Activated T-helper 1 cell treated with anti-CD3 and anti-CD28 coated beads, Interleukin-12 subunit alpha, Interleukin-12 subunit beta, Interleukin-2, Interleukin-4 antibody, amounts not matched to agents 30 ng/mL and 10 ng/mL and 1 ng/mL, durations not matched to agents 14 hours and 24 hours and 36 hours (primary cell): ENCODE measurements at regions of chr6 and their contacts with region 1.

Region 1: DNA sequence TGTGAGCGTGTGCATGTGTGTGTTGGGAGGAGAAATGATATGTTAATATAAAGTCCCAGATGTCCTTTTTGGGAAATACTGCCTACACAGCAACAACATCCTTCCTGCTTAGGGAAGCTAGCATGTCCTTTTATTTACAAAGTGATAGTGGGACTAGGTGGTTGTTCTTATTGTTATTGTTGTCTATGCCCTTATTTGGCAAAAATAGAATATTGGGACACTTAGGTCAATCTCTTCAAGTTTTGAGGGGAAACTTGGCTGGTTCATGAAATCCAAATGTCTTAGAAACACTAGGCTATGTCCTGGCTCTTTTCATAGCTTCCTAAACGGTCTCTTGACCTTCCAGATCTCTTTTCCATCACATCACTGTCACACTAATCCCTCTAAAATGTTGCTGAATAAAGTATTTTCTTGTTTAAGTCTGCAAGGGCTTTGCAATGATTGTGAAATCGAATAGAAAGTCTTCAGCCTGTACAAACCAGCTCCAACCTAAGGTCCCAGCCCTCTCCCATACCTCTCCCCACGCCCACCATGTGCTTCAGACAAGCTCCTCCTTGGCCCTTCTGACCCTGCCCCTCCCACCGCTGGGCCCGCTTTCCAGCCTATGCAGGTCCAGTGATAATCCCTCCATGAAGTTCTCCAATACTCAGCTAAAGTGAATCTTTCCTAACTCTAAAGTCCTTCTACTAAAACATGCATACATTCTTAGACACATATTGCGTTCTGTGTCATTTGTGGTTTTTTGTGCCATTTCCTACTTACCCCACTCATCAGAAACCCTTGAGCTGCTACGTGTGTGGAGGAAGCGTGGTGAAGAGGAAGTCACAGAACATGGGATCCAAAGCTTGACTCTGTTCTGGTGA is 205.1 kb downstream of the LY86 start:
- DNase-seq: no peak
- H3K4me3 Mint-ChIP-seq: peak overlapping the region; percentile 48
- H3K27ac Mint-ChIP-seq: peak overlapping the region; percentile 82
- H3K4me1 Mint-ChIP-seq: peaks cover 51% of the 10 kb centered on the region
- H3K27me3 Mint-ChIP-seq: peaks cover 10% of the 10 kb centered on the region

Region 2: GRCh38 chr6:6556738-6557505 is 236.7 kb before region 1 on chr6:
- intact Hi-C with region 1: loop called (anchors 5 kb)
- DNase-seq: peak; percentile 15
- H3K4me3 Mint-ChIP-seq: no peak overlapping the region
- H3K27ac Mint-ChIP-seq: no peak overlapping the region
- H3K4me1 Mint-ChIP-seq: peaks cover 49% of the 10 kb centered on the region
- H3K27me3 Mint-ChIP-seq: peaks cover 16% of the 10 kb centered on the region

Region 3: DNA sequence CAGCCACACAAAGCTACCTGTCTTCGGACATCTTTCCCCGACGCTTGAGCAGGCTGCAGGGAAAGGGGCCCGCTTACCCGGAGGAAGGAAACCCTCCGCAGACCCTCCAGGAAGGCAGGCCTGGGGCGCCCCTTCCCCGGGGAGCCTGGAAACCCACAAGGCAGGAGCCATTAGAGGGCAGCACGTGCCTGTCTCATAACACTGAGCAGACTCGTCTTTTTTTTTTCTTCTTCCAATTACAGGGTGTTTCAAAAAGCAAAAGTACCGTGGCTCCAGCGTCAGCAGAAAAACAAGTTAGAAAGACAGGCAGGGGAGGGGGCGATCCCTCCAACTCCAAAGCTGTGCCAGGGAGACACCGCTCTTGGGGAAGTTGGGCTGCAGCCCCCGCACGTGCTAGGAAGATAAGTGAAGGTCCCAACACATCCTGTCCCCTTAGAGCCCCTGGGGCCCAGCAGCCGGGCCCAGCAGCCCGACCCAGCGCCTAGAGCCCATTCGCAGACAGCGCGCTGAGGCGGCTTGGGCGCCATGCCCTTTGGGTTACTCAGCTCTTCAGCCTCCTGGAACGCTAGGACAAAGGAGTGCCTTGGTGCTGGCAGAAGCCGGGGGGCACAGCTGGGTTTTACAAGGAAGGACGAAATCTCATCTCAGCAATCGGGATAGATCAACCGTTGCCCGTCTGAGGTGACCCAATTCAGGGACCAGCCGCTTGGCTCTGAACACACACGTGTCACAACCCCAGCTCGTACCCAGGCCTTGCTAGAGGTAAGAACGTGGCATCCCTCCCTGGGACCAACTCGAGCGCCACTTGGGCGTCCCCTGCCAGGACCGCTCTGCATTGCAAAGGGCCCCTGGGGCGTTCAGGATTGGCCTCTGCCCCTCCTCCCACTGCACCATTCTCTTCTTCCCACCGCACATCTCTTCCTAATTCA is 68.8 kb before region 1 on chr6:
- intact Hi-C with region 1: no loop called
- DNase-seq: peak; percentile 33
- H3K4me3 Mint-ChIP-seq: no peak overlapping the region
- H3K27ac Mint-ChIP-seq: no peak overlapping the region
- H3K4me1 Mint-ChIP-seq: peaks cover 15% of the 10 kb centered on the region
- H3K27me3 Mint-ChIP-seq: peaks cover 18% of the 10 kb centered on the region

Region 4: GRCh38 chr6:6749702-6750491 is 43.7 kb before region 1 on chr6:
- intact Hi-C with region 1: loop called (anchors 2 kb)
- DNase-seq: peak; percentile 42
- H3K4me3 Mint-ChIP-seq: peak overlapping the region; percentile 67
- H3K27ac Mint-ChIP-seq: peak overlapping the region; percentile 61
- H3K4me1 Mint-ChIP-seq: peaks cover 30% of the 10 kb centered on the region
- H3K27me3 Mint-ChIP-seq: peaks cover 13% of the 10 kb centered on the region

Region 5: GRCh38 chr6:6856538-6857523 is 63.2 kb after region 1 on chr6:
- intact Hi-C with region 1: loop called (anchors 1 kb)
- DNase-seq: peak; percentile 45
- H3K4me3 Mint-ChIP-seq: peak overlapping the region; percentile 65
- H3K27ac Mint-ChIP-seq: peak overlapping the region; percentile 89
- H3K4me1 Mint-ChIP-seq: peaks cover 42% of the 10 kb centered on the region
- H3K27me3 Mint-ChIP-seq: peaks cover 8% of the 10 kb centered on the region

Region 6: DNA sequence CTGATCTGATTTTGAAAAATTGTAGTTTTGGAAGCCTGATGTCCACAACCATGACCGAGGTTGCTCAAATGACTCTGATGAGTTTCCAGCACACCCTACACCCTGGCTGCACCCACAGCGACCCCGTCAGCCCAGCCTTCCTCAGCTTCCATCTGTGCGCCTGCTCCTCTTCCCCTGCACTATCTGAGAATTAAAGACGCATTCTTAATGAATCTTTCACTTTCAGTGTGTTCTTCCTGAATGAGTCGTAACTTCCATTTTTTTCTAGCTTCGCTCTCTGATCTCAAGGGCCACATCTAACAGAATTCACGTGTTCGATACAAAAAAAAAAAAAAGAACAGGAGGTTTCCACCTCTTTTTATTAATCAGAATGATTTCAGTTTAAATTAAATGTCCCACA is 292.9 kb after region 1 on chr6:
- intact Hi-C with region 1: loop called (anchors 5 kb)
- DNase-seq: no peak
- H3K4me3 Mint-ChIP-seq: peak overlapping the region; percentile 63
- H3K27ac Mint-ChIP-seq: no peak overlapping the region
- H3K4me1 Mint-ChIP-seq: peaks cover 27% of the 10 kb centered on the region
- H3K27me3 Mint-ChIP-seq: peaks cover 81% of the 10 kb centered on the region

Region 7: DNA sequence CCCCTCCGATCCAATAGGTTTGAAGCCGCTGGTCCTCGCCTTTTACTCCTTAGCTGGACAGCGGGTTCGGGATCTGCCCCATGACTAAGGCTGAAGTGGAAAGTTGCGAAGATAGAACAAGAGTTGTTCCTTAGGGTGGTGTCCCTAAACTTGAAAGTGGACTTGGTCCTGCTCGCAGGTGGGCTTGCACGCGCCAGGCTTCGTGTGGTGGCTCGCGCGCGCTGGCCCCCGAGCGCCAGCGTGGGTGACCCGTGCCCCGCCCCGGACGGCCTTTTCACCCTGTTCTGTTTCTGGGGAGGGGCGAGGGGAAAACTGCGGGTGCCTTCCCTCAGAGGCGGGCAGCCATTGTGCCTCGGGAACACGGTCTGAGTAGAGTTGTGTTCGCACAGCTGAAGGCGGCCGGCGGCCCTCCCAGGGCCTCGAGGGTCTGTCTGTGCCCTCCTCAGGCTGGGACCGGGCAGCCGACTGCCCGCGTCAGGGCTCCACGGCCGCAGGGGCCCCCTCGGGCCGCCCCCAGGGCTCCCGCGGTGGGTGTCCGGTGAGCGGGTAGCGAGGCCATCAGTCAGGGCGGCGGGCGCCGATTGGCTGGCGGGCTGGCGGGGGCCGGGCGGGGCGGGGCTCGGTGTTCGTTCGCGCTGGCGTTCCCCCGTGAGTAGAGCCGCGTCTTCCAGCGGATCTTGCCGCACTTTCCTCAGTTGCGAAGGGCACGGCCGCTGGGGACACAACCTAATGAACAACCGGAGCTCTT is 347.2 kb after region 1 on chr6:
- intact Hi-C with region 1: loop called (anchors 10 kb)
- DNase-seq: peak; percentile 78
- H3K4me3 Mint-ChIP-seq: peak overlapping the region; percentile 84
- H3K27ac Mint-ChIP-seq: peak overlapping the region; percentile 84
- H3K4me1 Mint-ChIP-seq: peaks cover 68% of the 10 kb centered on the region
- H3K27me3 Mint-ChIP-seq: no peaks in the 10 kb centered on the region